ENCODE measurements at regions of chr2 and their contacts with region 1.

Region 1: DNA sequence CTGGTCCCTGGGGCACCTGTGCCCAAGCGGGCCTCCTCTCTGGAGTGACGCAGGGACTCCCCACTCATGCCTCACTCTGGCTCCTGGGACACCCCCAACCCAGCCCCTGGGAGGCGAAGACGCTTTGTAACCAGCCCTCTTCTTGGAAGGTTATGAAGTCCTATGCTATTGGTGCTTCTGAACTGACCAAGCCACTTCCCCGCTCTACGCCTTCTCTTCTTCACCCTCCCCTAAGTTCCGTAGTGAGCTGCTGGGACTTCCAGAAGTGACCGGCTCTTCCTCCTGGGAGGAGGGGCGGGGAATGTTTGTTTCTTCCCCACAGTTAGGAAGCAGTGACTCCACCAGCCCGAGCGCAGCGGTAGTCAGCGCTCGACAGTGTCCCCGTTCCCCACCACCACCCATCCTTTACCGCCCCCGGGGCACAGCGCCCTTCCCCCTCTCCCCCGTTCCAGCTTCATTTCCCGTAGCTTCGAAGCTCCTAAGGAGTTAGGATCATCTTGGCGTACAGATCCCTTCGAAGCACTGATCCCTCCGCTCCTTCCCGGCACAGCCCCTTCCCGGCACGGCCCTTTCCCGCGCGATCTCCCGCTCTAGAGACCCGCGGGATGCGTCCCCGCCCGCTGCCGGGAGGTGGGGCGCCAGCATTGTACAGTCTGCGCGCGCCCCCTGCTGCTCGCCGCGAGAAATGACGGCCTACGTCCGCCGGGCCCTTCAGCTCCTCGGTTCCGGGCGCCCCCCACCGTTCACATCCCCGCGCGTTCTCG is 25.3 kb upstream of the NOTO start:
- DNase-seq: peak; percentile 93
- ATAC-seq: peak; percentile 94
- H3K4me3 Mint-ChIP-seq: peak overlapping the region; percentile 80
- H3K27ac Mint-ChIP-seq: peak overlapping the region; percentile 56
- H3K4me1 Mint-ChIP-seq: peaks cover 23% of the 10 kb centered on the region
- H3K27me3 Mint-ChIP-seq: peaks cover 51% of the 10 kb centered on the region

Region 2: GRCh38 chr2:72973566-72974435 is 203.3 kb before region 1 on chr2:
- CTCF ChIA-PET with region 1: interaction called, 21 read pairs
- POLR2A ChIA-PET with region 1: no interaction called
- DNase-seq: peak; percentile 62
- ATAC-seq: peak; percentile 89
- H3K4me3 Mint-ChIP-seq: no peak overlapping the region
- H3K27ac Mint-ChIP-seq: no peak overlapping the region
- H3K4me1 Mint-ChIP-seq: peaks cover 6% of the 10 kb centered on the region
- H3K27me3 Mint-ChIP-seq: peaks cover 2% of the 10 kb centered on the region

Region 3: GRCh38 chr2:73071360-73072133 is 105.5 kb before region 1 on chr2 and contains the start of gene SFXN5:
- CTCF ChIA-PET with region 1: interaction called, 13 read pairs
- POLR2A ChIA-PET with region 1: interaction called, 3 read pairs
- DNase-seq: peak; percentile 96
- ATAC-seq: peak; percentile 92
- H3K4me3 Mint-ChIP-seq: peak within 1 kb of the TSS; percentile 79
- H3K27ac Mint-ChIP-seq: peak within 1 kb of the TSS; percentile 85
- H3K4me1 Mint-ChIP-seq: peaks cover 28% of the 10 kb centered on the region
- H3K27me3 Mint-ChIP-seq: no peaks in the 10 kb centered on the region
- total RNA-seq, gene SFXN5: 15.7 to 18.6 TPM

Region 4: DNA sequence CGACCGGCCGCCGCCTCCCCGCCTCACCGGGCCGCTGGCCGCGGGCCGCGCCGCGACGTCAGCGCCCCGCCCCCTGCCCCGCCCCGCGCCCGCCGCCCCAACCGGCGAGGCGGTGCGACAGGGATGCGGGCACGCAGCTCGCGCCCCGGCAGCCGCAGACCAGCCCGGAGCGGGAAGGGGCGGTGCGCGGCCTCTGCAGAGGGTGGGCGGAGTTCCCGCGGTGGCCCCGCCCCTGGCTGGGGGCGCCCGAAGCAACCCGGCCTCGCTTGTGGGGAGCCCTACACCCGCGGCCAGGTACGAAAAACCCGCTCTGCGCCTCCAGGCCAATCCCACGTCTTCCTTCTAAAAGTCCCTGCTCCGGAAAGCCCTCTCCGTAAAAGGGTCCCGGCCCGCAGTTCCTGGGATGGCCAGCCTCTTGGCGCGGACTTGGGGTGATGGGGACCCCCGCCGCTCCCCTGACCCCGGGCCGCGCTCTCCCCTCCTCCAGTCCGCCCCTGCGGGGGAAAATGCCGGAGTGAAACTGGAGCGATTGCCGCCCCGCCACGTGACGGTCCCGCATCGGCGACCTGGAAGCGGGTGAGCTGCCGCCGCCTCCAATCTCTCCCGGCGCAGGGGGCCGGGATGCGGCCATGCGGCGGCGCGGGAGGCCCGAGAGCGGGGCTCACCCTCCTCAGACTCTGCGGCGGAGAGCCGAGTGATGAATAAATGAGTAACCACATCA is 64.0 kb before region 1 on chr2 and contains the start of gene RAB11FIP5:
- CTCF ChIA-PET with region 1: interaction called, 12 read pairs
- POLR2A ChIA-PET with region 1: no interaction called
- DNase-seq: peak; percentile 66
- ATAC-seq: peak; percentile 87
- H3K4me3 Mint-ChIP-seq: peak within 1 kb of the TSS; percentile 62
- H3K27ac Mint-ChIP-seq: no peak within 1 kb of the TSS
- H3K4me1 Mint-ChIP-seq: peaks cover 15% of the 10 kb centered on the region
- H3K27me3 Mint-ChIP-seq: peaks cover 33% of the 10 kb centered on the region
- total RNA-seq, gene RAB11FIP5: 1.4 to 1.7 TPM

Region 5: GRCh38 chr2:73163483-73164367 is 13.3 kb before region 1 on chr2:
- CTCF ChIA-PET with region 1: interaction called, 11 read pairs
- POLR2A ChIA-PET with region 1: no interaction called
- DNase-seq: peak; percentile 69
- ATAC-seq: peak; percentile 83
- H3K4me3 Mint-ChIP-seq: no peak overlapping the region
- H3K27ac Mint-ChIP-seq: no peak overlapping the region
- H3K4me1 Mint-ChIP-seq: no peaks in the 10 kb centered on the region
- H3K27me3 Mint-ChIP-seq: peaks cover 11% of the 10 kb centered on the region

Region 6: DNA sequence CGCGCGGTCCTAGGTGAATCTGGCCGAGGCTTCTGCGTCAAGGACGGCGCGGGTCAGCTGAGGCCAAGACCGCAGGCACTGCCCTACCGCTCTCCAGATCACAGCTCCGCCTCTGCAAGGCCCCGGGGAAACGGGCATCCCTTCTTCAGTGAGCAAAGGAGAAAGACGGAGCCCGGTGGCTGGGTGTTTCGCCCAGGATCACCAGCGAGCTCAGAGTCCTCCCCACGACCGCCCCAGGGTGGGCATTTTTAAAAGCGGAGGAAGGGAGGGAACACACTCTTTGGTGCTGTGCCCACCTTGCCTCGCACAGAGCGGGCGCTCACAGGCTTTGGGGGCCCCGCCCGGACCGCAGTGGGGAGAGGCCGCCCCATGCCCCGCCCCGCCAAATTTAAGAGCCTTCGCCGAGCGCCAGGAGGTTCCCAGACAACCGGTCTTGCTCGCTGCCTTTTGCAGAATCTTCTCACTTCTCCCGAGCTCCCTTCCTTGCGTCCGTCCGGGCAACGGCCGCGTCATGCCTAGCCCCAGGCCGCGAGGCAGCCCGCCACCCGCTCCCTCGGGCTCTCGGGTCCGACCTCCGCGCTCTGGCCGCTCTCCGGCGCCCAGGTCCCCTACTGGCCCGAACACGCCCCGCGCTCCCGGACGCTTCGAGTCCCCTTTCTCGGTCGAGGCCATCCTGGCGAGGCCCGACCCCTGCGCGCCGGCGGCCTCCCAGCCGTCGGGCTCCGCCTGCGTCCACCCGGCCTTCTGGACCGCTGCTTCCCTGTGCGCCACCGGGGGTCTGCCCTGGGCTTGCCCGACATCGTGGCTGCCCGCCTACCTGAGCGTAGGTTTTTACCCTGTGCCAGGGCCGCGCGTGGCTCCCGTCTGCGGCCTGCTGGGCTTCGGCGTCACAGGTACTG is 25.3 kb after region 1 on chr2 and contains the start of gene NOTO:
- CTCF ChIA-PET with region 1: interaction called, 112 read pairs
- POLR2A ChIA-PET with region 1: interaction called, 3 read pairs
- DNase-seq: no peak
- ATAC-seq: peak; percentile 66
- H3K4me3 Mint-ChIP-seq: no peak within 1 kb of the TSS
- H3K27ac Mint-ChIP-seq: no peak within 1 kb of the TSS
- H3K4me1 Mint-ChIP-seq: peaks cover 6% of the 10 kb centered on the region
- H3K27me3 Mint-ChIP-seq: peaks cover 44% of the 10 kb centered on the region
- total RNA-seq, gene NOTO: not detected

Region 7: GRCh38 chr2:73218298-73218697 is 41.2 kb after region 1 on chr2:
- CTCF ChIA-PET with region 1: interaction called, 112 read pairs
- POLR2A ChIA-PET with region 1: interaction called, 5 read pairs
- DNase-seq: no peak
- ATAC-seq: no peak
- H3K4me3 Mint-ChIP-seq: no peak overlapping the region
- H3K27ac Mint-ChIP-seq: no peak overlapping the region
- H3K4me1 Mint-ChIP-seq: peaks cover 20% of the 10 kb centered on the region
- H3K27me3 Mint-ChIP-seq: no peaks in the 10 kb centered on the region